A673 (cell line): ENCODE measurements at regions of chr5 and their contacts with region 1.

Region 1: GRCh38 chr5:30324083-30324482 is 869.4 kb upstream of the CDH6 start:
- DNase-seq: no peak
- H3K4me3 ChIP-seq: no peak overlapping the region
- H3K27ac ChIP-seq: no peak overlapping the region
- H3K4me1 ChIP-seq: peaks cover 11% of the 10 kb centered on the region
- H3K27me3 ChIP-seq: no peaks in the 10 kb centered on the region
- CTCF ChIP-seq: peak; percentile 26; the same call in 1 of the 2 replicates

Region 2: GRCh38 chr5:29811914-29812679 is 512.0 kb before region 1 on chr5:
- CTCF ChIA-PET with region 1: no interaction called
- POLR2A ChIA-PET with region 1: no interaction called
- intact Hi-C with region 1: loop called (anchors 10 kb)
- DNase-seq: peak; percentile 51
- H3K4me3 ChIP-seq: no peak overlapping the region
- H3K27ac ChIP-seq: no peak overlapping the region
- H3K4me1 ChIP-seq: no peaks in the 10 kb centered on the region
- H3K27me3 ChIP-seq: no peaks in the 10 kb centered on the region
- CTCF ChIP-seq: peak; percentile 42

Region 3: GRCh38 chr5:29930316-29930715 is 393.8 kb before region 1 on chr5:
- CTCF ChIA-PET with region 1: no interaction called
- POLR2A ChIA-PET with region 1: no interaction called
- intact Hi-C with region 1: loop called (anchors 10 kb)
- DNase-seq: peak; percentile 17
- H3K4me3 ChIP-seq: no peak overlapping the region
- H3K27ac ChIP-seq: no peak overlapping the region
- H3K4me1 ChIP-seq: no peaks in the 10 kb centered on the region
- H3K27me3 ChIP-seq: no peaks in the 10 kb centered on the region
- CTCF ChIP-seq: no peak

Region 4: GRCh38 chr5:30099641-30100072 is 224.4 kb before region 1 on chr5:
- CTCF ChIA-PET with region 1: no interaction called
- POLR2A ChIA-PET with region 1: no interaction called
- intact Hi-C with region 1: loop called (anchors 5 kb)
- DNase-seq: peak; percentile 90
- H3K4me3 ChIP-seq: peak overlapping the region; percentile 10
- H3K27ac ChIP-seq: peak overlapping the region; percentile 90
- H3K4me1 ChIP-seq: peaks cover 52% of the 10 kb centered on the region
- H3K27me3 ChIP-seq: no peaks in the 10 kb centered on the region
- CTCF ChIP-seq: no peak

Region 5: DNA sequence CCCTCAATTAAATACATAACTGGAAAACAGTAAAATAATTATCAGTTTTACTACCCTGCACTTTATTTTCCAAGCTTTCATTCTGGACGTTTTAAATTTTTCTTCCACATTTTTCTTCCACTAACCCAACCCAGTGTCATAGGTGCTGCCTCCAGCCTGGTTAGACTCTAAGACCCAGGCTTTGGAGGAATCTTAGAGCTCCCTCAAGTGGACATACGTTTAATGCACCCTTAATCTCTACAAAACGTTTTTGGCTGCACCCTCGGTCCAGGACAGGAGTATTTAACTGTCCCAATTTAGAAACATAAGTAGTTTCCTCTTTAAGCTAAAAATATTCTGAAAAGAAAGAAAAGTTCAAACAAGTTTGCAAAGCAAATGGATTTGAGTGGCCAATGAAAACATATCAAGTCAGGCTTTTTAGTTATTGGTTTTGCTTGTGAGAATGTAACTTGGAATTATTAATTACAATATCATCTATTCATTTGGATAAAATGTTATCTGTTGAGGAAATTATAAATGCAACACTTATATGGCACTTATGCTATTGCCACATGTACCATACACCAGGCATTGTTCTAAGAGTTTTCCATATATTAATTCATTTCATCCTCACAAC is 908.3 kb after region 1 on chr5:
- CTCF ChIA-PET with region 1: no interaction called
- POLR2A ChIA-PET with region 1: no interaction called
- intact Hi-C with region 1: loop called (anchors 5 kb)
- DNase-seq: peak; percentile 84
- H3K4me3 ChIP-seq: no peak overlapping the region
- H3K27ac ChIP-seq: no peak overlapping the region
- H3K4me1 ChIP-seq: peaks cover 44% of the 10 kb centered on the region
- H3K27me3 ChIP-seq: no peaks in the 10 kb centered on the region
- CTCF ChIP-seq: peak; percentile 88